ENCODE measurements at regions of chr12 and their contacts with region 1.

Region 1: DNA sequence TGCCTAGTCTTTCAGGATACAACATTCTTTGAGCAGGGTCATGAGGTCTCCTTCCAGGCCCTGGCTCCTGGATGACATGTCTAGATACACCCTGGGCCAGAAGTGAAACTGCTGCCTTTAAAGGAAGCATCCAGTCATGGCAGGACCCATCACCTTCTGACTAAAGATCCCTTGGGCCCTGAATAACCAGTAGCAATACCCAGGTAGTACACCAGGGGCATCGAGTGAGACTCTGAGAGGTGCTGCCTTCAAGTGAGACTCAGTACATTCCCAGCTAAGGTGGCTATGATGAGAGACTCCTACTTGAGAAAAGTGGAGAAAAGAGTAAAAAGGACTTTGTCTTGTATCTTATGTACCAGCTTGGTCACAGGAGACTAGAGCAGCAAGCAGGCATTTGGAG is 23.5 kb downstream of the OR6C68 start:
- DNase-seq: no peak
- H3K4me3 ChIP-seq: no peak overlapping the region
- H3K27ac ChIP-seq: no peak overlapping the region
- H3K4me1 ChIP-seq: no peaks in the 10 kb centered on the region
- H3K27me3 ChIP-seq: peaks cover 4% of the 10 kb centered on the region
- CTCF ChIP-seq: no peak

Region 2: GRCh38 chr12:55582066-55582465 is 66.4 kb after region 1 on chr12:
- CTCF ChIA-PET with region 1: no interaction called
- dilution Hi-C with region 1: loop called (anchors 5 kb)
- in situ Hi-C with region 1: no loop called
- intact Hi-C with region 1: no loop called
- DNase-seq: no peak
- H3K4me3 ChIP-seq: no peak overlapping the region
- H3K27ac ChIP-seq: no peak overlapping the region
- H3K4me1 ChIP-seq: no peaks in the 10 kb centered on the region
- H3K27me3 ChIP-seq: peaks cover 5% of the 10 kb centered on the region
- CTCF ChIP-seq: no peak